PC-9 (cell line): ENCODE measurements at regions of chr3 and their contacts with region 1.

Region 1: GRCh38 chr3:185912929-185913901 is 24.6 kb downstream of the TRA2B start:
- DNase-seq: no peak
- H3K4me3 ChIP-seq: no peak overlapping the region
- H3K27ac ChIP-seq: 0 out of 2 replicates have a peak overlapping the region, but pooled peaks have one; percentile 15
- H3K4me1 ChIP-seq: no peaks in the 10 kb centered on the region
- H3K27me3 ChIP-seq: no peaks in the 10 kb centered on the region
- CTCF ChIP-seq: no peak

Region 2: DNA sequence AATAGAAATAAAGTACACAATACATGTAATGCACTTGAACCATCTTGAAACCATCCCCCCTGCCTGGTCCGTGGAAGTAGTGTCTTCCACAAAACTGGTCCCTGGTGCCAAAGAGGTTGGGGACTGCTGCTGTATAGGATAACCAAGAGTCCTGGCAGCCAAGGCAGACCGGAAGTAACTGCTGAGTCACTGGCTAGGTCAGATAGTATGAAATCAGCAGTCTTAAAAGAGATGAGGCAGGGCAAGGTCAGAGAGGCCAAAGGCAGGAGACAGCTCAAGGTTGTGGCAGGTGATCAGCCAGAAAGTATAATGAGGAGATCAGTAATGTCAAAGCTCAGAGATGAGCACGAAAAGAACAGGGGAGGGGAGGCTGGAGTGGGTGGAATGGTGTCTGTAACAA is 490.0 kb before region 1 on chr3:
- CTCF ChIA-PET with region 1: no interaction called
- POLR2A ChIA-PET with region 1: interaction called, 10 read pairs
- intact Hi-C with region 1: no loop called
- DNase-seq: peak in 1 of 2 experiments; percentile 29
- H3K4me3 ChIP-seq: no peak overlapping the region
- H3K27ac ChIP-seq: no peak overlapping the region
- H3K4me1 ChIP-seq: peaks cover 7% of the 10 kb centered on the region; the same call in 1 of the 2 replicates
- H3K27me3 ChIP-seq: no peaks in the 10 kb centered on the region
- CTCF ChIP-seq: no peak

Region 3: GRCh38 chr3:185687271-185687878 is 225.8 kb before region 1 on chr3:
- CTCF ChIA-PET with region 1: no interaction called
- POLR2A ChIA-PET with region 1: no interaction called
- intact Hi-C with region 1: loop called (anchors 5 kb)
- DNase-seq: peak; percentile 21 to 51
- H3K4me3 ChIP-seq: no peak overlapping the region
- H3K27ac ChIP-seq: peak overlapping the region; percentile 93
- H3K4me1 ChIP-seq: peaks cover 59% of the 10 kb centered on the region
- H3K27me3 ChIP-seq: no peaks in the 10 kb centered on the region
- CTCF ChIP-seq: no peak

Region 4: GRCh38 chr3:185851046-185851445 is 62.2 kb before region 1 on chr3:
- CTCF ChIA-PET with region 1: no interaction called
- POLR2A ChIA-PET with region 1: interaction called, 14 read pairs
- intact Hi-C with region 1: no loop called
- DNase-seq: no peak
- H3K4me3 ChIP-seq: no peak overlapping the region
- H3K27ac ChIP-seq: no peak overlapping the region
- H3K4me1 ChIP-seq: peaks cover 5% of the 10 kb centered on the region
- H3K27me3 ChIP-seq: no peaks in the 10 kb centered on the region
- CTCF ChIP-seq: no peak

Region 5: GRCh38 chr3:186097663-186098451 is 184.6 kb after region 1 on chr3:
- CTCF ChIA-PET with region 1: no interaction called
- POLR2A ChIA-PET with region 1: no interaction called
- intact Hi-C with region 1: no loop called
- DNase-seq: peak; percentile 93 to 95
- H3K4me3 ChIP-seq: peak overlapping the region; percentile 52
- H3K27ac ChIP-seq: peak overlapping the region; percentile 53
- H3K4me1 ChIP-seq: peaks cover 24% of the 10 kb centered on the region
- H3K27me3 ChIP-seq: no peaks in the 10 kb centered on the region
- CTCF ChIP-seq: no peak

Region 6: DNA sequence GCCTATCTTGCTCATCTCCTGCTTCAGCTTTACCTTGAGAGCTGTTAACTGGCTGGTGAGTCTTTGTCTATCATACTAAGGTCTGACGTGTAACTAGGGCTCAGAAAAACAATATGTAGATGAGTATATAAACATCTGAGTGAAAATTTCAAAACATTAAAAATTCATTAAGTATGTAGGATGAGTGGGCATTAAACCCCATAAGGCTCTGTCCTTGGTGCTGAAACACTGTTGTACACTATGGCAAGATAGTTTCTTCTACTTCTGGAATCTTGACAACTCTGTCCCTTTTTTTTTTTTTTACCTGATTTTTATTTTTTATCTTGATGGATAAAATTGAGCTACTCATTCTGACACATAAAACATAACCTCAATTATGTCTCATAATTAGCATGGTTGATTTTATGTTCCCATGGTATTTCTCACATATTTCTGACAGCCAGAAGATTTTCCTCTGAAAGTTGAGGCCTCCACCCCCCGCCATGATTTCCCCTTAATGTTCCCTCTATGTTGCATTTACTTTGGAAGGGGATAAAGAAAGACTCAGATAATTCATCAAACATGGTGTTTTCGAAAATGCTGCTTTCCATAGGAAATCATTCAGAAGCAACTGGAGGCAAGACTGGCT is 394.5 kb after region 1 on chr3:
- CTCF ChIA-PET with region 1: no interaction called
- POLR2A ChIA-PET with region 1: no interaction called
- intact Hi-C with region 1: no loop called
- DNase-seq: no peak
- H3K4me3 ChIP-seq: no peak overlapping the region
- H3K27ac ChIP-seq: no peak overlapping the region
- H3K4me1 ChIP-seq: no peaks in the 10 kb centered on the region
- H3K27me3 ChIP-seq: peaks cover 72% of the 10 kb centered on the region
- CTCF ChIP-seq: no peak